ENCODE measurements at regions of chr9 and their contacts with region 1.

Region 1: GRCh38 chr9:97468658-97469448 is 32.6 kb upstream of the TMOD1 start:
- ATAC-seq: peak; percentile 90 to 100 (median 99)
- H3K4me3 ChIP-seq: no peak overlapping the region
- H3K27ac ChIP-seq: no peak overlapping the region
- H3K4me1 ChIP-seq: no peaks in the 10 kb centered on the region

Region 2: GRCh38 chr9:97598461-97599288 is 129.8 kb after region 1 on chr9:
- in situ Hi-C with region 1: loop called in 6 of 9 experiments (anchors 10 to 25 kb)
- ATAC-seq: peak; percentile 63 to 96 (median 81)
- H3K4me3 ChIP-seq: no peak overlapping the region
- H3K27ac ChIP-seq: peak overlapping the region in 1 of 2 donors; percentile 10
- H3K4me1 ChIP-seq: peaks cover 0 to 2% of the 10 kb centered on the region in 2 donors

Measured in motor neuron (in vitro differentiated cells).